ENCODE measurements at regions of chr1 and their contacts with region 1.

Region 1: GRCh38 chr1:153617675-153618074 is 1.6 kb upstream of the S100A14 start:
- DNase-seq: no peak
- ATAC-seq: peak; percentile 83
- H3K4me3 ChIP-seq: no peak overlapping the region
- H3K27ac ChIP-seq: peak overlapping the region; percentile 66
- H3K4me1 ChIP-seq: peaks cover 9% of the 10 kb centered on the region
- H3K27me3 ChIP-seq: no peaks in the 10 kb centered on the region
- CTCF ChIP-seq: peak; percentile 56

Region 2: DNA sequence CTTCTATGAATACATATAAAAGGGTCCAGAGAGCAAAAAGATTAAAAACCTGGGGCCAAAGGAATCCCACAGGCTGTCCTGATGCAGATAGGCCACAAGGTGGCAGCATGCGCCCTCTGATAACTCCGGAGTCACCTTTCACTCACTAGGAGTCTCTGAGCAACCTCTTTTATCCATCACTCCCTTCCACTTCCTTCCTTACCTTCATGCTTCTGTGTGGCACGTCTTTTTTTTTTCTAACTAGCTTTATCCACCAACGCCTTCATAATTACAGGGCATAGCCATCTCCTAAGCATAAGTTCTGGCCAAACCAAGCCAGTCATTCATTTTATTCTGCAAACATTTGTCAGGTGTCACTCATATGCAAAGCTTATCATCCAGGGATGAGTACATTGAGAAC is 265.2 kb before region 1 on chr1:
- CTCF ChIA-PET with region 1: no interaction called
- POLR2A ChIA-PET with region 1: no interaction called
- in situ Hi-C with region 1: loop called (anchors 25 kb)
- intact Hi-C with region 1: no loop called
- DNase-seq: no peak
- ATAC-seq: peak; percentile 64; the same call in 1 of the 2 replicates
- H3K4me3 ChIP-seq: no peak overlapping the region
- H3K27ac ChIP-seq: no peak overlapping the region
- H3K4me1 ChIP-seq: 0 out of 2 replicates have a peak, but pooled peaks cover 3% of the 10 kb centered on the region
- H3K27me3 ChIP-seq: peaks cover 10% of the 10 kb centered on the region
- CTCF ChIP-seq: peak; percentile 93

Region 3: GRCh38 chr1:153510984-153511410 is 106.7 kb before region 1 on chr1:
- CTCF ChIA-PET with region 1: interaction called, 3 read pairs
- POLR2A ChIA-PET with region 1: no interaction called
- in situ Hi-C with region 1: no loop called
- intact Hi-C with region 1: loop called (anchors 5 kb)
- DNase-seq: peak; percentile 65
- ATAC-seq: peak; percentile 87
- H3K4me3 ChIP-seq: no peak overlapping the region
- H3K27ac ChIP-seq: peak overlapping the region; percentile 79
- H3K4me1 ChIP-seq: peaks cover 47% of the 10 kb centered on the region
- H3K27me3 ChIP-seq: no peaks in the 10 kb centered on the region
- CTCF ChIP-seq: peak; percentile 96

Region 4: DNA sequence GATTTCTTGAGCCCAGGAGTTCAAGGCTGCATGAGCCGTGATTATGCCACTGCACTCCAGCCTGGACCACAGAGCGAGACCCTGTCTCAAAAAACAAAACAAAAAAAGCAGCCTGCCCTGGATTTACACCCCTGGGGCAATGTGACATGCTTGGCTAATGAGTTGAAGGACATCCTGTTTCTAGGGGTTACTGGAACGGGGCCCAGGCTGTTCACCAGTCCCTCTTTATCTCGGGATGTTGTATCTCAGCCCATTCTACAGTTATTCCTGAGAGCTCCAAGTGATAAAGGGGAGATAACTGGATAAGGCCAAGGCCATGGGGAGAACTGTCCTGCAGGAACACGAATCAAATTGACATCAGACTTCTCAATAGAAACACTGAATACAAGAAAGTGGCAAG is 30.4 kb before region 1 on chr1:
- CTCF ChIA-PET with region 1: no interaction called
- POLR2A ChIA-PET with region 1: interaction called, 13 read pairs
- in situ Hi-C with region 1: no loop called
- intact Hi-C with region 1: no loop called
- DNase-seq: no peak
- ATAC-seq: no peak; the same call in 1 of the 2 replicates
- H3K4me3 ChIP-seq: no peak overlapping the region
- H3K27ac ChIP-seq: no peak overlapping the region
- H3K4me1 ChIP-seq: no peaks in the 10 kb centered on the region
- H3K27me3 ChIP-seq: no peaks in the 10 kb centered on the region
- CTCF ChIP-seq: no peak

Region 5: DNA sequence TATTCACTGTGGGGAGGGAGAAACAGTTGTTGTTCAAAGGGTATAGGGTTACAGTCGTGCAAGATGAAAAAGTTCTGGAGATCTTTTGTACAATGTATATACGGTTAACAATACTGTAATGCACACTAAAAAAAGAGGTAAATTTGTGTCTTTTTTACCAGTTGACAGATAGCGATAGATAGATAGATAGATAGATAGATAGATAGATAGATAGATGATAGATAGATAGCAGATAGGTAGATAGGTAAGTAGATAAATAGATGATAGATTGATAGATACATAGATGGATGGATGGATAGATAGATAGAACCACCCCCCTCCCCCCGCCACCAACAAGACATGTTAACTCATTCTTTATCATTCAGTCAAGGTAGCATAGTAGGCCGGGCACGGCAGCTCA is 14.9 kb before region 1 on chr1:
- CTCF ChIA-PET with region 1: no interaction called
- POLR2A ChIA-PET with region 1: interaction called, 14 read pairs
- in situ Hi-C with region 1: no loop called
- intact Hi-C with region 1: no loop called
- DNase-seq: no peak
- ATAC-seq: no peak
- H3K4me3 ChIP-seq: no peak overlapping the region
- H3K27ac ChIP-seq: no peak overlapping the region
- H3K4me1 ChIP-seq: no peaks in the 10 kb centered on the region
- H3K27me3 ChIP-seq: no peaks in the 10 kb centered on the region
- CTCF ChIP-seq: no peak

Region 6: GRCh38 chr1:153711006-153711405 is 93.3 kb after region 1 on chr1:
- CTCF ChIA-PET with region 1: no interaction called
- POLR2A ChIA-PET with region 1: no interaction called
- in situ Hi-C with region 1: no loop called
- intact Hi-C with region 1: no loop called
- DNase-seq: no peak
- ATAC-seq: no peak
- H3K4me3 ChIP-seq: peak overlapping the region in 1 of 2 experiments; percentile 24; a peak in 2 of 4 replicates
- H3K27ac ChIP-seq: no peak overlapping the region
- H3K4me1 ChIP-seq: peaks cover 4% of the 10 kb centered on the region; the same call in 1 of the 2 replicates
- H3K27me3 ChIP-seq: no peaks in the 10 kb centered on the region
- CTCF ChIP-seq: no peak

Region 7: GRCh38 chr1:153752571-153753195 is 135.0 kb after region 1 on chr1:
- CTCF ChIA-PET with region 1: no interaction called
- POLR2A ChIA-PET with region 1: no interaction called
- in situ Hi-C with region 1: no loop called
- intact Hi-C with region 1: no loop called
- DNase-seq: no peak
- ATAC-seq: no peak
- H3K4me3 ChIP-seq: no peak overlapping the region
- H3K27ac ChIP-seq: no peak overlapping the region
- H3K4me1 ChIP-seq: no peaks in the 10 kb centered on the region
- H3K27me3 ChIP-seq: no peaks in the 10 kb centered on the region
- CTCF ChIP-seq: no peak

Measured in Panc1 (cell line).